GM13977 (cell line): ENCODE measurements at regions of chr13 and their contacts with region 1.

Region 1: GRCh38 chr13:20495082-20496023 is 30.3 kb downstream of the CRYL1 start:
- DNase-seq: peak; percentile 75
- CTCF ChIP-seq: peak; percentile 84

Region 2: GRCh38 chr13:20209948-20210347 is 285.4 kb before region 1 on chr13:
- in situ Hi-C with region 1: loop called (anchors 10 kb)
- DNase-seq: no peak
- CTCF ChIP-seq: no peak

Region 3: DNA sequence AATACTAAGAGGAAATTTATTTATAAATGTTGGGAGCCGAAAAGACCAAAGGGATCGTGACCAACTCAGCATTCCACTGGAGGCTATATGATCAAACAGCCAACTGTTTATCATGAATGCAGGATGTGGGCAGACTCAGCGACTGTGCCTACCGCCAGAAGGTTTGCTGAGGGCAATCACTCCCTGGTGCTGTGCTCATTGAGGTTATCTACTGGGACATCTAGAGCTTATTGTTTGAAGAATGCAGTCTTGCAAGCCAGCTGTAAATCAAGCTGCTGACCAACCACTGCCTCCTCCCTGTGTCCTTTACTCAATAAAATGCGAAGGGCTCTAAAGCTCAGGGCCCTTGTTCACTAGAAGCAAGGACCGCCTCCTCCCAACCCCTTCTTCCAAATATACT is 415.7 kb after region 1 on chr13:
- in situ Hi-C with region 1: loop called (anchors 10 kb)
- DNase-seq: no peak
- CTCF ChIP-seq: no peak